ENCODE measurements at regions of chr1 and their contacts with region 1.

Region 1: GRCh38 chr1:9101510-9102146 is 27.3 kb downstream of the GPR157 start:
- DNase-seq: peak in 1 of 3 donors; percentile 64
- ATAC-seq: peak; percentile 56 to 67
- H3K4me3 ChIP-seq: no peak overlapping the region
- H3K27ac ChIP-seq: no peak overlapping the region
- H3K4me1 ChIP-seq: no peaks in the 10 kb centered on the region
- H3K27me3 ChIP-seq: no peaks in the 10 kb centered on the region

Region 2: DNA sequence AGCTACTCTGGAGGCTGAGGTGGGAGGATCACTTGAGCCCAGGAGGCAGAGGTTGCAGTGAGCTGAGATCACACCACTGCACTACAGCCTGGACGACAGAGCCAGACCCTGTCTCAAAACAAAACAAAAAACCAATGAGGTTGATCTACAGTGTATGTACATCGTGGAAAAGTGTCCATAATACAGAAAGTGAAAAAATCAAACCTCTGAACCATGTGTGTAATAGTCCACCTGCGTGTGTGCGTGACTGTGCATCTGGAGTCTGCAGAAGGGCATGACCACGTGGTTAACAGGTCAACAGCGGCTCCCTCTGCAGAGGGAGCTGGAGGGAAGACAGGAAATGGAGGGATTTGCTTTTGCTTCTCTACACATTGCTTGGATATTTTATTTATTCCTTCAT is 190.7 kb before region 1 on chr1:
- intact Hi-C with region 1: loop called in 1 of 4 experiments (anchors 10 kb)
- DNase-seq: no peak
- ATAC-seq: no peak
- H3K4me3 ChIP-seq: no peak overlapping the region
- H3K27ac ChIP-seq: no peak overlapping the region
- H3K4me1 ChIP-seq: no peaks in the 10 kb centered on the region
- H3K27me3 ChIP-seq: no peaks in the 10 kb centered on the region

Region 3: DNA sequence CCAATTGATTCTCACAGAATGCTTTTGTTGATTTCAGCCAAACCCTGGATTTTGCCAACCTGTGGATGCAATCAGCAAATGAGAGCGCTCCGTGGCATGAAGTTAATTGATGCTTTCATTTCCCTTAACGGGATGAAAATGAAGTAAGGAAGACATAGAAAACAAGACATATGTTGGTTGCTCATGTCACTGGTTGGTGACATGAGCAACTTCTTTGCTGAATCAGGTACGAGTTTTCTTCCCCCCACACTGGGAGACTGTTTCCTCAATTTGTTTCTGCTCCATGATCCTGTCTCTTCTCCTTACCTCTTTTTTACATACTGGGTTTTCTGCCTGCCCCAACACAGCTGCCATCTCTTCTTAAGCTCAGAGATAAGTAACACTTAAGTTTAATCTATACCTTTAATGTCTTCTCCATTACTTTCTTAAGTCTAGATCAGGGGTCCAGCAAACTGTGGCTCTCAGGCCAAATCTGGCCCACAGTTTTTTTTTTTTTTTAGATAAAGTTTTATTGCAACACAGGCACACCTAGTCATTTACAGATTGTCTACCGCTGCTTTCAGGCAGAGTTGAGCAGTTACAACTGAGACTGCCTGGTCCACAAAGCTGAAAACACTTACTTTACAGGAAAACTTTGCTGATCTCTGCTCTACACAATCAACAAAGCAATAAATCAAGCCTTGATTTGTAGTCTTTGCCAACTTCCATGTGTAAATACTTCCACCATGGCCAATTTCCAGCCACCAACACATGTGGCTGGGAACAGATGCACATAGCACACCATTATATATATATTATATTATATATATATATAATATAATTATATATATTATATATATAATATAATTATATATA is 13.9 kb after region 1 on chr1:
- intact Hi-C with region 1: no loop called
- DNase-seq: no peak
- ATAC-seq: no peak
- H3K4me3 ChIP-seq: no peak overlapping the region
- H3K27ac ChIP-seq: no peak overlapping the region
- H3K4me1 ChIP-seq: peaks cover 7% of the 10 kb centered on the region
- H3K27me3 ChIP-seq: no peaks in the 10 kb centered on the region

Measured in right cardiac atrium (tissue), 5 donors.